ENCODE measurements at regions of chr2 and their contacts with region 1.

Region 1: GRCh38 chr2:163345908-163346573 is 389.8 kb downstream of the FIGN start:
- DNase-seq: peak; percentile 85
- ATAC-seq: 0 out of 2 replicates have a peak, but pooled peaks have one; percentile 8
- H3K4me3 ChIP-seq: no peak overlapping the region
- H3K27ac ChIP-seq: no peak overlapping the region
- H3K4me1 ChIP-seq: peaks cover 25% of the 10 kb centered on the region
- H3K27me3 ChIP-seq: no peaks in the 10 kb centered on the region
- CTCF ChIP-seq: peak; percentile 82

Region 2: GRCh38 chr2:163453920-163454319 is 107.9 kb after region 1 on chr2:
- CTCF ChIA-PET with region 1: no interaction called
- POLR2A ChIA-PET with region 1: no interaction called
- intact Hi-C with region 1: loop called (anchors 5 kb)
- DNase-seq: no peak
- ATAC-seq: no peak
- H3K4me3 ChIP-seq: no peak overlapping the region
- H3K27ac ChIP-seq: no peak overlapping the region
- H3K4me1 ChIP-seq: no peaks in the 10 kb centered on the region
- H3K27me3 ChIP-seq: peaks cover 52% of the 10 kb centered on the region
- CTCF ChIP-seq: no peak

Region 3: DNA sequence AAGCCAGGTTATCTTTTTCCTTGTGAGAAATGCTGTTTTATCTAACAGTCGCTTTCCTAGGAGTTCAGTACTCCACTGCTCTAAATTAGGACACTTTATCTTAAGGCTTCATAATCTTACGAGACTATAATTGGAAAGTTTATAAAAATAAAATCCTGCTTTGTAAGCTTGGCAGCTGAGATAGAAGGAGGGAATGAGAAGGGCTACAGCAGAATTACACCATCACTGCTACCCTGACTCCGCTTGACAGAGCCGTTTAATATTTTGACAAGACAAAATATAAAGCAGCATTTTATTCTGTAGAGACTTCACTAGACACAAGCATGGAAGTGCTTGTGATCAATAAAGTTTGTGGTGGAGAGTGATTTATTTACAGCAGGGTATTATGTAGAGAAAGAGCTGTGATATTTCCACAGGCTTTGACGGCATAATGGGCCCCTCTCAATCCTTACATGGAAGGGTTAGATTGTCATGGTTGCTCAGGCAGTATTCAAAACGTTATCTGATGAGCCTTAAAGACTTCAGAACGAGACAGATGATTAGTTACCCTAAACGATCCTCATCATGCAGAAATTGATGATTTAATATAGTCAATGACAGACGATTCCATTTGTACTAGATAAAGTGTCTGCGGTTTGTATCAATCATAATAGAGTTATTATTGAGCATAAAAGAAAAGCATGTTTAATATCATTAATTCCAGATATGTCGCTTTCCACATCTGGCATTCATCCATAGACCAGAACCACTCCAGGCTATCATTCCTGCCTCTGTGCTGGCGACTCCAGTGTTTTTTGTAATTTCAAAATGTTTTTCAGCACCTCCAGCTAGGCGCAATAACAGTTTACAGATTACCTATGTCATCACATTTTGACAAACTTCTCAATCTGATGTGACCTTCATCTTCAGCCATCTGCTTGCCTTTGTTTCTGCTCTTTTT is 147.6 kb after region 1 on chr2:
- CTCF ChIA-PET with region 1: no interaction called
- POLR2A ChIA-PET with region 1: no interaction called
- intact Hi-C with region 1: no loop called
- DNase-seq: no peak
- ATAC-seq: no peak
- H3K4me3 ChIP-seq: no peak overlapping the region
- H3K27ac ChIP-seq: no peak overlapping the region
- H3K4me1 ChIP-seq: no peaks in the 10 kb centered on the region
- H3K27me3 ChIP-seq: peaks cover 60% of the 10 kb centered on the region
- CTCF ChIP-seq: no peak

Region 4: DNA sequence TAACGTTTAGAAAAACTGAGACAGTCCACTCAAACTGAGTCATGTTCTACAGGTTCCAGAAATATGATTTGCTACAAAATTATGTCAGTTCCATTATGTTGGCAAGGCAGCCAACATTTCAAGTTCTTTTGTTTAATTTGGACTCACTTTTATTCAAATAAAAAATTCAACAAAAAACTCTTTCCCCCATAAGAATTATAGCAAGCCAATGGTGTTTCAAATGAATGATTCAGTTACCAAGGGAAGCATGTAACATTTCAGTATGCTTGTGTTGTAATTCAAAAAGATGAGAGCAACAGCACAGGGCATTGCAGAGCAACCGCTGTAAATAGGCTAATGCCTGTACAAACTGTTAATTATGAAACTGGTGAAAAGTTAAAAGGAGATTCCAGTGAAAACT is 249.0 kb after region 1 on chr2:
- CTCF ChIA-PET with region 1: no interaction called
- POLR2A ChIA-PET with region 1: no interaction called
- intact Hi-C with region 1: loop called (anchors 5 kb)
- DNase-seq: peak; percentile 34
- ATAC-seq: peak; percentile 77
- H3K4me3 ChIP-seq: no peak overlapping the region
- H3K27ac ChIP-seq: no peak overlapping the region
- H3K4me1 ChIP-seq: 0 out of 2 replicates have a peak, but pooled peaks cover 3% of the 10 kb centered on the region
- H3K27me3 ChIP-seq: no peaks in the 10 kb centered on the region
- CTCF ChIP-seq: no peak

Region 5: GRCh38 chr2:163778044-163778781 is 432.2 kb after region 1 on chr2:
- CTCF ChIA-PET with region 1: no interaction called
- POLR2A ChIA-PET with region 1: no interaction called
- intact Hi-C with region 1: loop called (anchors 5 kb)
- DNase-seq: peak; percentile 97
- ATAC-seq: peak; percentile 71
- H3K4me3 ChIP-seq: no peak overlapping the region
- H3K27ac ChIP-seq: peak overlapping the region; percentile 47
- H3K4me1 ChIP-seq: peaks cover 68% of the 10 kb centered on the region
- H3K27me3 ChIP-seq: no peaks in the 10 kb centered on the region
- CTCF ChIP-seq: no peak

Region 6: DNA sequence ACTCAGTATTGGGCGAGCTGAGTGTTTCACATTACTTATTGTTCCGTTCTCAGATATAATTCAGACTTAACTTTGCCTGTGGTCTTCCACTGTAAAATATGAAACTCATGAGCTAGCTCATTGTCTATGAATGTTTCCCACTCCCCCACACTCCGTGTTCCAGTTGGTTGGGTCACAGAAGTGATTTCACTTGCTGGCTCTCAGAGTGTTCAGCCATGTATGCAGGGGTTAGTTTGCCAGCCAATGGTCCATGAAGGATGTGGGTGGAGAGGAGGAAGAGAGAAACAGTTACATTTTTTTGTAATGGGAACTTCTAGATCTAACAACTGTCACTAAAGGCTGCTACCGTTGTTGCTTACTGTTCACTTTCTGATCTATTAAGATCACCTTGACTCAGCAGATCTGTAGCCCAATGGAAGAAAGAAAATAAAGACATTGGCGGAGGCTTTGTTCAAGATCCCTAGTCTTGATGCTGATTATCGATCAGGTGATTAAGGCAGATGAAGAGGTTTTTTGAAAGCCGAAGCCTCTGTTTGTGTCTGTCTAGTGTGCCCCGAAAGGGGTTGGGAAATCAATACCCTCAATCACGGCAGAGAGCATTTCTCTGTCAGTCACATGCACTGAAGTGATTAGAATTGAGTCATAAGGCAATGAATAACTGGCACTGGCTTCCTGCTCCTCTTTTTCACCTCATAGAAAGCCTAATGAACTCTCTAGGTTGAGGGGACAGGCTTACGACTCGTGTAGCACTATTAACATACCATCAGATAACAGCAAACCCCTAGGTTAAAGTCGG is 669.5 kb after region 1 on chr2:
- CTCF ChIA-PET with region 1: no interaction called
- POLR2A ChIA-PET with region 1: no interaction called
- intact Hi-C with region 1: no loop called
- DNase-seq: no peak
- ATAC-seq: no peak
- H3K4me3 ChIP-seq: no peak overlapping the region
- H3K27ac ChIP-seq: no peak overlapping the region
- H3K4me1 ChIP-seq: no peaks in the 10 kb centered on the region
- H3K27me3 ChIP-seq: peaks cover 46% of the 10 kb centered on the region
- CTCF ChIP-seq: no peak

Region 7: DNA sequence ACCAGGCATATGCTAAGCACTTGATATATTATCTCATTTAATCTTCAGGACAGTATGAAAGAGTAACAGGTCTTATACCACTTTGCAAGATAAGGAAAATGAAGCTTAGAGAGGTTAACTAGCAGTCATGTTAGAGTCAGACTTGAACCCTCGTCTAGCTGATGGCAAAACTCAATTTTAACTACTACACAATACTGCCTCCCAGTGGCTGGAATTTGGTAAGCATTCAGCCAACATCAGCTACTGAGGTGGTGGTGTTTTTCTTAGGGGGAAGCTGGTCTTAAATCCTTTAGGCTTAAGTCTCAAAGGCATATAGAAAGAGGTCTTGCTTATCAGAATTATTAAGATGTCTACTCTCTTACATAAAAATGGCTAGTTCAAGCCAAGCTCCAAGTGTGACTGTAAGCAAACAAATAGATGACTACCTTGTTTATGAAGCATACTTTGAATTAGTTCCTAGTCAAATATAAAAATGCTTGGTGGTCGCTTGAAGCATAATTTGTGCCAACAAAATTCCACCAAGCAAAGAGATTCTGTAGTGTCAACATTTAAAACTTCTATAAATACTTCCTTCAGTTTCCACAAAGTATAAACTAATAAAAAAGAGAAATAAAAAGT is 715.2 kb after region 1 on chr2:
- CTCF ChIA-PET with region 1: interaction called, 4 read pairs
- POLR2A ChIA-PET with region 1: no interaction called
- intact Hi-C with region 1: loop called (anchors 1 kb)
- DNase-seq: peak; percentile 69
- ATAC-seq: peak; percentile 45
- H3K4me3 ChIP-seq: no peak overlapping the region
- H3K27ac ChIP-seq: no peak overlapping the region
- H3K4me1 ChIP-seq: no peaks in the 10 kb centered on the region
- H3K27me3 ChIP-seq: peaks cover 32% of the 10 kb centered on the region
- CTCF ChIP-seq: peak; percentile 93

Region 8: DNA sequence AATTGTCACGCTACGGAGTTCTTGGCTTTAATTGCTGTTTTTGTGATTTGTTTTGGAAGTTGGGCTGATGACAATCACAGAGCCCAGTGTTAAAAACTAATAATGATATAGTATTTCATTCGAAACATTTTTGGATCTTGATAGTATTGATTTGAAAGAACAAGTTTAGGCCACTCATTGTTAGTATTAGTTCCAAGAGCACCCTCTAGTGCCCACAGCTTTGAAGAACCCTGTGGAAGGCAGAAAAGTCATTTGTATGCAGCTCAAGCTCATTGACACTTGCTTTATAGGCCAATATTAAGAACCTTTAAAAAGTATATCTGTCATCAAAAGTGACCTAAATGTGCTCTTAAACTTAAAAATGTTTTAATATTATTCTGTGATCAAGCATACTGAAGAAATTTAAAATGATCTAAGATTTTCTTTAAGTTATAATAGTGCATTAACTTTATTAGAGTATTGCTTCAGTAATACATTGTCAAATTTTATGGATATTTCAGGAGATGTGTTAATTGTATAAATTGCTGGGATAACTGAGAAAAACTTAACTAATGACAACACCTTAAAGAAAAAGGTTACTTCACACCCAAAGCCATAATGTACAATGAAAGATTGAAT is 1084.2 kb after region 1 on chr2:
- CTCF ChIA-PET with region 1: no interaction called
- POLR2A ChIA-PET with region 1: no interaction called
- intact Hi-C with region 1: loop called (anchors 1 kb)
- DNase-seq: peak; percentile 64
- ATAC-seq: no peak
- H3K4me3 ChIP-seq: no peak overlapping the region
- H3K27ac ChIP-seq: no peak overlapping the region
- H3K4me1 ChIP-seq: no peaks in the 10 kb centered on the region
- H3K27me3 ChIP-seq: peaks cover 78% of the 10 kb centered on the region
- CTCF ChIP-seq: peak; percentile 83

Measured in PC-3 (cell line).